Dendritic cell treated with granulocyte-macrophage colony-stimulating factor and Interleukin-4, amounts not matched to agents 40 ng/mL and 50 ng/mL, for 4 days (primary cell): ENCODE measurements at regions of chr11 and their contacts with region 1.

Region 1: GRCh38 chr11:2420502-2421225 is 20.1 kb downstream of the TSSC4 start:
- H3K4me3 Mint-ChIP-seq: no peak overlapping the region
- H3K27ac Mint-ChIP-seq: no peak overlapping the region
- H3K4me1 Mint-ChIP-seq: no peaks in the 10 kb centered on the region
- H3K27me3 Mint-ChIP-seq: peaks cover 42% of the 10 kb centered on the region

Region 2: DNA sequence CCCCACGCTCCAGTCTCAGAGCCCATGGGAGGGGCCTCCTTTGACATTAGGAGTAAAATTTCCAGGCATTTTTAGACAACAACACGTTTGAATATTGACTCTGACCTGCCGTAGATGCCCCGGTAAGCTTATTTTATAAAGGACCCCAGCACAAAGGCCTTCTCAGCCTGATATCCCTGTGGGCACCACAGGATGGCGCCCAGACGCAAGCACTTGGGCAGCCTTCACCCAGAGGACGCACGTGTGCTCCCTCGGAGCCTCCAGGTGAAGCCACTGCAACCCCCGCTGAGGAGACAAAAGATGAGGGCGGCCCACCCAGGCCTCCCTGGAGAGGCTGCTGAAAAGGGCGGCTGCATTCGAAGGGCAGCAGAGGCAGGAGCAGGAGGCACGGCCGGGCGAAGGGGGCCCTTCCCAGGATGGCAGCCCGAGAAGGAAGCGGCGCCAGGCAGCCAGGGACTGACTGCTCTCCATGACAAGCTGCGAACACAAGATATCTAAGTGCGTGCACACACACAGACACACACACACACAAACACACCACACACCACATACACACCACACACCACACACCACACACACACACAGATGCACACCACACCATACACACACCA is 233.9 kb before region 1 on chr11:
- intact Hi-C with region 1: loop called (anchors 2 kb)
- H3K4me3 Mint-ChIP-seq: no peak overlapping the region
- H3K27ac Mint-ChIP-seq: no peak overlapping the region
- H3K4me1 Mint-ChIP-seq: peaks cover 6% of the 10 kb centered on the region
- H3K27me3 Mint-ChIP-seq: peaks cover 27% of the 10 kb centered on the region